A549 (cell line): ENCODE measurements at regions of chr6 and their contacts with region 1.

Region 1: DNA sequence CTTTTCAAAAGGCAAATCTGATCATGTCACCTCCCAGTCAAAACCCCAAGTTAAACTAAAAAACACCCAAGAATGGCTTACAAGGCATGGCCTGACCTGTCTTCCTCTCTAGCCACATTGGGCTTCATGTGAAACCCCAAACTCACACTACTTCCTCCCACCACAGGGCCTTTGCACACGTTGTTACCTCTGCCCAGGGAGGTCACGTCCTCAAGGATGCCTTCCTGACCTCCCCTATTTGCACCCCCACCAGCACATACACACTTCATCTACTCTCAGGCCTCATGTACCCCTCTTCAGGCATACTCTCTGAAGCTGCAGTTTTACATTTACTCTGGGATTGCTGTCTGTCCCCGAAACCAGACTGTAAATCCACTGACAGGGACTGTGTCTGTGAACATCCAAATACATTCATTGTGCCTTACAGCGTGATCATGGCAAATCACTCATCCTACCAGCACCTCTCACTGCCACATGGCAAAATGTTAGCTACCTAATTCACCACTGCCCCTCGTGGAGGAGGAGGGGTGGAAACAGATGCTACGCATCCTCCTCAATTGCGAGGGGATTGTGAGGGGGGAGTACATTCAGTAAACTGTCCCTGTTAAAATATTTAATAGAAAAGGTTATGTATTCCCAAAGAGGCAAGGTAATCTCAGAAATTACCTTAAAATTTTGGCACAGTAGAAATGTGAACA is 6.0 kb downstream of the EZR start:
- DNase-seq: no peak
- ATAC-seq: no peak
- H3K4me3 ChIP-seq: peak overlapping the region; percentile 17; the same call in 1 of the 3 replicates
- H3K27ac ChIP-seq: peak overlapping the region in 1 of 2 experiments; percentile 40; a peak in 1 of 6 replicates
- H3K4me1 ChIP-seq: peaks cover 79% of the 10 kb centered on the region
- CTCF ChIP-seq: no peak
- EP300 ChIP-seq: no peak
- POLR2A ChIP-seq: no peak
- RAD21 ChIP-seq: no peak

Region 2: DNA sequence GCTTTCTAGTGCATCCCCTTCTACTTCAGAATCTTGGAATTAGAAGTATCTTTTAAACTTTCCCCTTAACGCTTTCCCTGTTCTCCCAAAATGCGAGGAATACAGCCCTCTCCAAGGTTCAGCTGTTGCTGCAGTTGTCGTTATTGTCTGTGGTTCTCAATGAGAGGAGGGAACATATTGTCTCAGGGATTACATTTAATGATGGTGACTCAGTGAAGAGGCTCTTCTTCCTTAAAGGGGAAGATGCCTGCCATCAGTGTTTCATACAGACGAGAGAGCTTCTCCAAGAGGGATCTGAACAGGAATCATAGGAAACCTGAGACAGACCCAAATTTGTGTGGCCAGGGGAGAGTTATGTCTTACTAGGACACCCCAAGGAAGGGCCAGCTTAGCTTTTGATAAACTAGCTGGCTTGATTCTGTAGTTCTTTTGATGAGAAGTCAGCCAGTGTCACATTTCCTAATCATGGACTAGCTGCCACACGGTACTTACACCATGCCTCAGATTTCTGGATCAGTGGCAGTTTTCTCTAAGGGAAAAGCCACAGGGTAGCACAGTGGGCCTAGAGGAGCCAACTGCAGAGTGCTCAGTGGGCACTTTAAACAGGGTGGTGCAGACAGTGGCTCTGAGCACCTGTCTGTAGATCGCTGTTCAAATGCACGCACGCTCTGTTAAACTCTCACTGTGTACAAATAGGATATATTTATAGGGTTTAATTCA is 313.0 kb before region 1 on chr6:
- CTCF ChIA-PET with region 1: no interaction called
- POLR2A ChIA-PET with region 1: no interaction called
- DNase-seq: no peak
- ATAC-seq: no peak
- H3K4me3 ChIP-seq: no peak overlapping the region
- H3K27ac ChIP-seq: no peak overlapping the region
- H3K4me1 ChIP-seq: no peaks in the 10 kb centered on the region
- CTCF ChIP-seq: no peak
- EP300 ChIP-seq: no peak
- POLR2A ChIP-seq: no peak
- RAD21 ChIP-seq: no peak

Region 3: GRCh38 chr6:158631678-158632537 is 181.3 kb before region 1 on chr6:
- CTCF ChIA-PET with region 1: no interaction called
- POLR2A ChIA-PET with region 1: no interaction called
- DNase-seq: peak; percentile 51 to 80
- ATAC-seq: peak; percentile 85 to 90
- H3K4me3 ChIP-seq: no peak overlapping the region
- H3K27ac ChIP-seq: peak overlapping the region; percentile 41 to 80; a peak in 5 of 6 replicates
- H3K4me1 ChIP-seq: peaks cover 22% of the 10 kb centered on the region
- CTCF ChIP-seq: no peak
- EP300 ChIP-seq: no peak
- POLR2A ChIP-seq: no peak
- RAD21 ChIP-seq: no peak

Region 4: DNA sequence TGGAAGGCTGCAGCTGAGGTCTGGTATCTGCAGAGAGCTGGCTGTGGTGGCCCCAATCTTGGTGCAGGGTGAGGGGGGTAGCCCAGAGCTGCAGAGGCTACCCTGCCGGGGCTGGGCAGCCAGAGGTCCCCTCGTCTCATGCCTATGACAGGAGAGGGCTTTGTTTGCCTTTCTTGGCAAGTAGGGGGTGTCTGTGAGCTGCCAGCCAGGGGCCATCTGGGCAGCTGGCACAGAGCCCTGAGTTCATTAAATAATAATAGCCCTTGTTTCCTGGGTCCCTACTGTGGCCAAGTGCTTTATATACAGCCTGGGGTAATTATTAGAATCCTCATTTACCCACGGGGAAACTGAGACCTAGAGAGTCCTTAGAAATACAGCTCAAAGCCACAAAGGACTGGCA is 60.6 kb before region 1 on chr6:
- CTCF ChIA-PET with region 1: no interaction called
- POLR2A ChIA-PET with region 1: no interaction called
- DNase-seq: no peak
- ATAC-seq: peak in 1 of 2 experiments; percentile 39; a peak in 3 of 6 replicates
- H3K4me3 ChIP-seq: no peak overlapping the region
- H3K27ac ChIP-seq: peak overlapping the region in 1 of 2 experiments; percentile 5; a peak in 1 of 6 replicates
- H3K4me1 ChIP-seq: peaks cover 12% of the 10 kb centered on the region; the same call in 2 of the 3 replicates
- CTCF ChIP-seq: no peak
- EP300 ChIP-seq: no peak
- POLR2A ChIP-seq: no peak
- RAD21 ChIP-seq: 0 out of 5 replicates have a peak, but pooled peaks of 1 of the 2 experiments have one; percentile 21

Region 5: GRCh38 chr6:158799051-158799792 is 14.0 kb before region 1 on chr6:
- CTCF ChIA-PET with region 1: interaction called, 20 read pairs
- POLR2A ChIA-PET with region 1: no interaction called
- DNase-seq: peak in 1 of 2 experiments; percentile 72
- ATAC-seq: peak; percentile 56 to 57
- H3K4me3 ChIP-seq: no peak overlapping the region
- H3K27ac ChIP-seq: peak overlapping the region in 1 of 2 experiments; percentile 55; a peak in 3 of 6 replicates
- H3K4me1 ChIP-seq: peaks cover 96% of the 10 kb centered on the region
- CTCF ChIP-seq: peak; percentile 29; the same call in 2 of the 3 replicates
- EP300 ChIP-seq: no peak
- POLR2A ChIP-seq: no peak
- RAD21 ChIP-seq: peak; percentile 21 to 35; a peak in 3 of 5 replicates